Activated CD8-positive, alpha-beta memory T cell treated with anti-CD3 and anti-CD28 coated beads, Interleukin-2, amount 10 ng/mL, durations not matched to agents 7 days and 5 days (primary cell): ENCODE measurements at regions of chr7 and their contacts with region 1.

Region 1: DNA sequence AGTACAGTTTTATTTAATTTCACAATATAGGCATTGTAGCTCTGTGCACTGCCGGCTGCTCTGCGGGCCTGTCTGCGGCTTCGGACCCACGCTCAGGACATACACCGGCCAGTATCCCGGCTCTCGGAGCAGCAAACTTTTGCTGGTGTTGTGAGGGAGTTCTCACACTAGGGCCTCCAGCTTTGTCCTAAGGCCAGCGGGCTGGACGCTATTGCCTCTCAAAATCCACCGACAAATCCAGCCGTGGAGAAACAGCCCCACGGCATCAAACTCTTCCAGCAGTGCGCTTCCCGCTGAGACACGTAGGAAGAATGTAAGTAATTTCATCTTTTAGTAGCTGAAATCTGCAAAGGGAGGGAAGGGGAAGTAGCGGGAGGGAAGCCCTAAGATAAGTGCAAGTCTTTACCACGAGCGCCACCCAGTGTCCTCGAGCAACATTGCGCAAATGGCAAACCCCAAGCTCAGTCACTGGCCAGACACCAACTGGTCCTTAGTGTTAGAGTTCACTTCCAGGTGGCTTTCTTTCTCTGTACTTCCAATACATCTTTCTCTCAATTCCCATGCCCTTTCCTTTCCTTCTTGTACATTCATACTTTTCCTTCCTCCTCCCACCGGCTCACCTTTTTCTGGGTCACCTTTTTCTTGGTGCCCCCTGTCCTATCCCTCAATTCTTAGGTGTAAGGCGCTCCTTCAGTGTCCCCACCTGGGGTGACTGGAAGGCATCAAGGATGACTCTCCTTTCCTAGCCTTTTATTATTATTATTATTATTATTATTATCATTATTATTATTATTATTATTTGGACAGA is 3.0 kb upstream of the DLX5 start:
- DNase-seq: peak; percentile 72
- ATAC-seq: peak; percentile 80
- H3K4me3 Mint-ChIP-seq: peak overlapping the region; percentile 51
- H3K27ac Mint-ChIP-seq: peak overlapping the region; percentile 48
- H3K4me1 Mint-ChIP-seq: peaks cover 21% of the 10 kb centered on the region
- H3K27me3 Mint-ChIP-seq: peaks cover 76% of the 10 kb centered on the region

Region 2: GRCh38 chr7:95916573-95917297 is 1110.9 kb before region 1 on chr7:
- CTCF ChIA-PET with region 1: interaction called, 26 read pairs
- DNase-seq: peak; percentile 76
- ATAC-seq: no peak
- H3K4me3 Mint-ChIP-seq: no peak overlapping the region
- H3K27ac Mint-ChIP-seq: no peak overlapping the region
- H3K4me1 Mint-ChIP-seq: peaks cover 8% of the 10 kb centered on the region
- H3K27me3 Mint-ChIP-seq: peaks cover 31% of the 10 kb centered on the region

Region 3: DNA sequence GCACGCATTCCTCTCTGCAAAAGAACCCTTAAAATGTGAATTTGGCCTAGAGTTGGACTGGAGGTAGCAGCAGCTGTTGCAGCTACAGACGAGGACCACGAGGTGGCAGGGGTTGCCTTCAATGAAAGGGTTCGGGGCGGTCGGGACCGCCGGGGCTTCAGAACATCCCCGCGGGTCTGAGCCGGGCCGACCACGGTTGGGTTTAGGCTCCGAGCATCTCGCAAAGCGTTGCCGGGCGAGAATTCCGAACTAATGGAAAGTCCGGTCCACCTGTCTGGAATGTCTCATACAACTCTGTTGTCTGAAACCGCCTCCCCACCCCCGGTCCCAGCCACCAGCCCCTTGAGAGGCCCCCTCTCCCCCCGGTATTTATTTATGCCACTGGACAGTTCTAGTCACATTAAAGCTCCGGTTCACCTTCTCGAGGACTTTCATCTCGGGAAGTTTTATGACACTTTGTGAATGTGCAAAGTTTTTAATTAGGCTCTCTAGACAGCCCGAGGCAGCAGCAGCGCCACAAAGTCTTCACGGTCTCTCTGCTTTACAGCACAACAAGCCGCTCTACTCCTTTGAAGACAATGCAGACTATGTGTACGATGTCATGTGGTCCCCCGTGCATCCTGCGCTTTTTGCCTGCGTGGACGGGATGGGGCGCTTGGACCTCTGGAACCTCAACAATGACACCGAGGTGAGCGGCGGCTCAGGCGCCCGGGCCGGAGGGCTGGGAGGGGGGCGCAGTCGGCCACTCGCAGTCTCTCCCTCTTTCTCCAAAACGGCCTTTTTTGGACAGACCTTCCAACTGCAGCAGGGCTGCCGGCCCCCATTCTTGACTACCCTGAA is 951.9 kb before region 1 on chr7:
- CTCF ChIA-PET with region 1: interaction called, 16 read pairs
- DNase-seq: peak; percentile 58
- ATAC-seq: peak; percentile 92
- H3K4me3 Mint-ChIP-seq: peak overlapping the region; percentile 67
- H3K27ac Mint-ChIP-seq: no peak overlapping the region
- H3K4me1 Mint-ChIP-seq: peaks cover 5% of the 10 kb centered on the region
- H3K27me3 Mint-ChIP-seq: peaks cover 51% of the 10 kb centered on the region

Region 4: DNA sequence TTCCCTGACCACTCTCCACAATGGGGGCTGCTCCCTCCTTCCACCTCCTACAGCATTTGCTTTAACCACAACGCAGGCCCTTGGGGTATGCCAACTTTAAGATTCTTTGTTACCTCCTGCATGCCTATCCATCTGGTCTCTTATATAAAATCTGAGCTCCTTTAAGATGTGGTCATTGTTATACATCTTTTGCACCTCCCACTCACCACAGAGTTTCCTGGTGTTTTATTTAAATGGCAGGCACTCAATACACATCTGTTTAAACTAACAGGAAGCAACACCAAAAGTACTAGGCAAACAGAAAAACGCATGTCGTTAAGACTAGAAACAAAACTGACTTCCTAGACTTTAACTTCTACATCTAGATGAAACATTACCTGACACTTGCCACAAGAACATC is 742.1 kb before region 1 on chr7:
- CTCF ChIA-PET with region 1: no interaction called
- DNase-seq: peak; percentile 58
- ATAC-seq: peak; percentile 86
- H3K4me3 Mint-ChIP-seq: peak overlapping the region; percentile 43
- H3K27ac Mint-ChIP-seq: peak overlapping the region; percentile 90
- H3K4me1 Mint-ChIP-seq: peaks cover 25% of the 10 kb centered on the region
- H3K27me3 Mint-ChIP-seq: no peaks in the 10 kb centered on the region

Region 5: GRCh38 chr7:96414931-96415292 is 612.7 kb before region 1 on chr7:
- CTCF ChIA-PET with region 1: interaction called, 14 read pairs
- DNase-seq: peak; percentile 66
- ATAC-seq: peak; percentile 77
- H3K4me3 Mint-ChIP-seq: no peak overlapping the region
- H3K27ac Mint-ChIP-seq: no peak overlapping the region
- H3K4me1 Mint-ChIP-seq: peaks cover 3% of the 10 kb centered on the region
- H3K27me3 Mint-ChIP-seq: peaks cover 26% of the 10 kb centered on the region

Region 6: DNA sequence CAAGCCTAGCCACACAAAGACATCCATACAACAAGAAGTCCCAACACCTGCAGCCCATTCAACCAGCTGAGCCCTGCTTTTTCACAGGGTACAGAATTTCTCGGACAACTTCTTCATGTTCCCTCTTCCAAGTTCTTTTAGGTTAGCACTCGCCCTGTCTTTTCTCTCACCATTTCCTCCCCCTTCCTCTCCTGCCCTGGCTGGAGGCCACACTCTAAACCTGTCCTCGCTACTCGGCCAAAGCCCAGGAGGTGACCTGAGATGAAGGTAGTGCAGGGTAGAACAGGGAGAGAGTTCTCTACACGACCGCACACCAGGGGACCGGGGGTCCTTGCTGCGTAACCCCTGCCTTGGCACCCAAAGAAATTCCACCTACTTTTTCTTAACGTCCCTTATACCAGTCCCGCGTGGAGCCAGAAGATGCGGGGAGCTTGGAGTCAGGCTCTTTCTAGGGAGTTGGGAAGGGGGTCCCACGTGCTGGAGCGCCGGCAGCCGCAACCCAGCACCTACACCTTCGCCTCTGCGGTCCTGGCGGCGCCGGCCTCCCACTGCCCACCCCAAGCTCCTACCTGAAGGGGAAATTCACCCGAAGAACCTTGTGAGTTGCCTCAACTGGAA is 38.3 kb before region 1 on chr7:
- CTCF ChIA-PET with region 1: interaction called, 16 read pairs
- DNase-seq: no peak
- ATAC-seq: no peak
- H3K4me3 Mint-ChIP-seq: no peak overlapping the region
- H3K27ac Mint-ChIP-seq: no peak overlapping the region
- H3K4me1 Mint-ChIP-seq: no peaks in the 10 kb centered on the region
- H3K27me3 Mint-ChIP-seq: peaks cover 81% of the 10 kb centered on the region

Region 7: DNA sequence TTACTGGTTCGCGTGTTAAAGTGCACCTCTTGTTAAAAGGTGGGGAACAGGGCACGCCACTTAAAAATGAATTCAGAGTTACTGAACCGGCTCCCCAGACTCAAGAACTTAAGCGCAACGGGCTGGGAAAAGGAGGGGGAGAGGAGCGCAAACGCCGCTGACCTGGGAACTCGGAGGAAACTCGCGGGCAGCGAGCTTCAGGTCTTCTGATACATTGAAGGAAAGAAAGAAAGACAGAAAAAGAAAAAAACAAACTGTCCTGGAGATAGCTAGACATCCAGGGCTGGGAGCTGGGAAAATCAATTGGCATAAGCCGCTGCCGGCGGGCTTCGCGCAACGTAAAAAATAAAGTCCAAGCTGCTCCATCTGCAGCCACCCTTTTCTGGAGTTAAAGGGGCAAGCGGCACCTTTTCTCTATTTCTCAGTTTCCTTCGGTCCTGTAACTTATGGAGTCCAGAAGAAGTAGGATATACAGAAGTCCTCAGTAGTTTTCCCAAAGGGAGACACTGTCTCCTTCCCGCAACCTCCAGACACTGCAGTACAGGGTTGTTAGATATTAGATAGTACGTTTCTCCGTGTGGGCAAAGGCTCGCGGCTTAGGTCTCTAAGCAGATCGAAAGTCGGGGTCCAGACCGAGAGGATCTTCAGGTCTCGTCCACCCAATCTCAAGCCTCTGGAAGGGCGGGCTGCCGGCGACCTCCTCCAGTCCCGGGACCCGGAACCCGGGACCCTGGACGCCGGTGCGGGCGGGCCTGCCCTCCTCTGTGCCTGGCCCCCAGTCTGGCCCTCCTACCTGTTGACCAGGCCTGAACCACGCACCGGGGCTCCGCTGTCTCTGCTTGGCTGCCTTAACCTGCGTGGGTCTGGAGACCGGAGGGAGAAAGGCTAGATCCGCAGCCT is 24.0 kb before region 1 on chr7:
- CTCF ChIA-PET with region 1: interaction called, 10 read pairs
- DNase-seq: no peak
- ATAC-seq: no peak
- H3K4me3 Mint-ChIP-seq: no peak overlapping the region
- H3K27ac Mint-ChIP-seq: peak overlapping the region; percentile 63
- H3K4me1 Mint-ChIP-seq: peaks cover 8% of the 10 kb centered on the region
- H3K27me3 Mint-ChIP-seq: peaks cover 91% of the 10 kb centered on the region

Region 8: DNA sequence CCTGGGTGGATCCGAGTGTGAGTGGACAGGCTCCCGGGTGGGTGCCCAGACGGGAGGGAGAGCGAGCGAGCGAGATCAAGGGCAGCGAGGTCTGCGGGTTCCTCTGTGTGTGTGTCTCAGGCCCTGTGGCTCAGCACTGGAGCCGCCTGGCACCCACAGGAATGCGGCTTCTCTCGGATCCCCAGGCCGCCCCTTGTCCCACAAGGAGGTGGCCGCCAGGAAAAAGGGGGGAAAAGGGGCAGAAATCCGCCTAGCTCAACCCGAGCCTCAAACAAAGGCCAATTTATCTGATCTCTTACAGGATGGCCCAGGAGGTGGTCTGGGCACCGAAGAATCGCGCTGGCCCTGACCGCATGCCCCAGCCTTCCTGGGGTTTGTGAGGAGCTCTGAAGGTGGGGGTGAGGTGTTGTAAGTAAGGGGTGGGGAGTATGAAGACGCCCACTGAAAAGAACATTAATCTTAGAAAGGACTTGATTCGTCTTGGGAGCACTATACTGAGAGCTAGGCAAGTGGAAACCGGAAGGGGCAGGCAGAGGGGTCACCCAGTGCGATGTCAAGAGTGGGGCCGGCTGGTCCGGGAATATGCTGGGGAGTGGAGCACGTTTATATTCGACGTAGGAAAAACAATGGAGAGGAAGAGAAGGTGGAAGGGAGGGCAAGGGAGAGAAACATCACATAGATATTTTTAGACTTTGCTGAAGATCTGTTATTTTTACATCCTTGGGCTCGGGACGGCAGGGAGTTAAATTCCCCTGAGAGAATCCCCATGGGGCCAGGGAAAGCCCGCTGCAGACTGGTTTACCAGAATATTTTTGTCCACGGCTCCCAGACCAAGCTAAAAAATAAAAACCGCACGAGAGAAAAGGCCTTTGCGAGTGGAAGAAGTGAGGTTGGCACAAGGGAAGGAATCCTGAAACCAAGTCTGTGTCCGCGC is 10.2 kb before region 1 on chr7:
- CTCF ChIA-PET with region 1: interaction called, 11 read pairs
- DNase-seq: no peak
- ATAC-seq: no peak
- H3K4me3 Mint-ChIP-seq: no peak overlapping the region
- H3K27ac Mint-ChIP-seq: peak overlapping the region; percentile 25
- H3K4me1 Mint-ChIP-seq: peaks cover 4% of the 10 kb centered on the region
- H3K27me3 Mint-ChIP-seq: peaks cover 96% of the 10 kb centered on the region